Posterior cingulate gyrus (tissue), 11 donors: ENCODE measurements at regions of chr22 and their contacts with region 1.

Region 1: GRCh38 chr22:38201710-38202436 is at the start of gene MAFF:
- DNase-seq: peak; percentile 79 to 98 (median 90)

Region 2: GRCh38 chr22:37394341-37394740 is 807.5 kb before region 1 on chr22:
- intact Hi-C with region 1: no loop called
- DNase-seq: no peak

Region 3: DNA sequence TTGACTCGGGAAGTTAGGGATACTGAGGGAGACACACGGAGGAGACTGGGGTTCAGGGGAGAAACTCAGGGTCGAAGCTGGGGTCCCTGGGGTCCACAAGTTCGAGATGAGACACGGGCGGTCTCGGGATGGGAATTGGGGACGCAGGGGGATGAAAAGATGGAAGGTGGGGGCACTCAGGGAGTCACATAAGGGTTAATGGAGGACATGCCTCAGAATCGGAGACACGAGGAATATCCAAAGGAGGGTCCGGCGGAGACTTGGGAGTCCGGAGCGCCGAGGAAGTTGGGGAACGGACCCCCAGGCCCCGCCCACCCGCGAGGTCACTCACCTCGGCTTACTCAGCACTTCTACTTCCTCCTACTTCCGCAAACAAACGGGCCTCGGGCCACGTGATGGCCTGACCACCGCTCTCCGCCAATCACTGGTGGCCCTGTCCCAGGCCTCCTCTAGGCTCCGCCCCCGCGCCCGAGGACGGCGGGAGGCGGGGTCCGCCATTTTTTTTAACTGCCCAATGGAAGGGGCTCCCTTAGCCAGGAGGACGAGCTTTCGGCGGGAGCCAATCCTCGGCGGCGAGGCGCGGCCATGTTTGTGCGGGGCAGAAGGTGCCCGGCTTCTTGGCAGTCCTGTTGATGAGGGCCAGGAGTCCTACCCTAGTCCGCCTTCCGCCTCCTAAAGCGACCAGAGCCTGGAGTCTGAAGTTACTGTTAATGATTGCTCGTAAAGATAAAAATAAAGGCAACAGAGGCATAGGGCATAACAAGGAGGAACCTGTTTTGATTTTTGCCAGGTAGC is 20.2 kb before region 1 on chr22 and contains the start of gene PLA2G6:
- intact Hi-C with region 1: loop called (anchors 1 kb)
- DNase-seq: peak; percentile 98 to 100 (median 98)